ENCODE measurements at regions of chr1 and their contacts with region 1.

Region 1: DNA sequence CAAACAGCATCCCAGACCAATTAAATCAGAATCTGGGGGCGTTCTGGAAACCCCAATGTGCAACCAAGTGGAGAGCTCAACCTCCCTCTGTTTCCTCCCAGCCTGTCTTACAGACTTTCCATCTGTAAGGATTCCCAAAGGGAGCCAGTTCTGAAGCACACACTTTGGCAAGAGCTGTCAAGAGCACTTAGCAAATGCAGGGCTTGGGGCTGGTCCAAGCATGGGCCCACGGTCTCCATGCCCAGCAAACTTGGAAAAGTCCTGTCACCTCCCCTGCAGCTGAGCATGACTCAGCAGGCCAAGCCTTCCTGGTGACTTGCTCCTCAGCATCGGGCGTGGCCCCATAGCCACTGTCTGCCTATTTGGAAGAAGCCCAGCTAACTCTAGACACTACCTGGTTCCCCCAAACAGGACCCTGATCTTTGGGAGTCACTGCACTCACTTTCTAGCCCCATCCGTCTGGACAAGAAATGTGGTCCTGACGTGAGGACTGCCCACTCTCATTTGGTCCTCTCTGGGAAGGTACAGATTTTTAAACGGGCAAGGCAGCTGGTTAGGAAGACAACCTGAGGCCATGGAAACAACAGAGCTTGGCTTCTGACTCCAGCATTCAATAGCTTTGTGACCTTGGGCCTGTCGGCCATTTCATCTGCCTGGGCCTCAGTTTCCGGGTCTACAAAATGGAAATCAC is 16.9 kb downstream of the SLC2A1 start:
- DNase-seq: peak; percentile 13
- ATAC-seq: no peak
- H3K4me3 ChIP-seq: no peak overlapping the region
- H3K4me3 Mint-ChIP-seq: no peak overlapping the region
- H3K27ac ChIP-seq: peak overlapping the region; percentile 66 to 76
- H3K27ac Mint-ChIP-seq: peak overlapping the region; percentile 92
- H3K4me1 ChIP-seq: peaks cover 98 to 100% of the 10 kb centered on the region in 2 donors
- H3K4me1 Mint-ChIP-seq: peaks cover 96% of the 10 kb centered on the region
- H3K27me3 ChIP-seq: no peaks in the 10 kb centered on the region
- H3K27me3 Mint-ChIP-seq: no peaks in the 10 kb centered on the region
- CTCF ChIP-seq: no peak

Region 2: GRCh38 chr1:42873670-42874069 is 68.1 kb before region 1 on chr1:
- CTCF ChIA-PET with region 1: no interaction called
- POLR2A ChIA-PET with region 1: no interaction called
- intact Hi-C with region 1: no loop called
- DNase-seq: no peak
- ATAC-seq: no peak
- H3K4me3 ChIP-seq: no peak overlapping the region
- H3K4me3 Mint-ChIP-seq: no peak overlapping the region
- H3K27ac ChIP-seq: no peak overlapping the region
- H3K27ac Mint-ChIP-seq: no peak overlapping the region
- H3K4me1 ChIP-seq: no peaks in the 10 kb centered on the region
- H3K4me1 Mint-ChIP-seq: no peaks in the 10 kb centered on the region
- H3K27me3 ChIP-seq: no peaks in the 10 kb centered on the region
- H3K27me3 Mint-ChIP-seq: peaks cover 3% of the 10 kb centered on the region
- CTCF ChIP-seq: no peak

Region 3: DNA sequence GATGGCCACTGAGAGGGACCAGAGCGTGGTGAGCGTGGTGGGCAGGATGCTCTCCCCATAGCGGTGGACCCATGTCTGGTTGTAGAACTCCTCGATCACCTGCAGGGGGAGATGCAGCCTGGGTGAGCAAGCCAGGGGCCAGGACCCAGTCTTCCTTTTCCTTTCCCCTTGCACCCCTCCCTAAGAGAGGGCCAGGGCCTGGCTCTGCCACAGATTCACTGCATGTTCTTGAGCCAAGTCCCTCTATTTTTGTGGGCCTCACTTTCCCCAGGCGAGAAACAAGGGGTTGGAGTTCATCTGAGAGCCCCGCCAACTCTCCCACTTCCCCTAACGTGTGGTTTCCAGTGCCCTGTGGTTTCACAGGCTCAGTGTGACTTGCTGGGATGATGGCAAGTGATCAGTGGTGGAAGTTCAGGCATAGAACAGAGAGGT is 10.7 kb before region 1 on chr1:
- CTCF ChIA-PET with region 1: interaction called, 121 read pairs
- POLR2A ChIA-PET with region 1: interaction called, 209 read pairs
- intact Hi-C with region 1: loop called (anchors 1 kb)
- DNase-seq: peak; percentile 80
- ATAC-seq: no peak
- H3K4me3 ChIP-seq: peak overlapping the region; percentile 2 to 42 (median 26)
- H3K4me3 Mint-ChIP-seq: peak overlapping the region; percentile 86
- H3K27ac ChIP-seq: peak overlapping the region; percentile 84 to 97
- H3K27ac Mint-ChIP-seq: peak overlapping the region; percentile 97
- H3K4me1 ChIP-seq: peaks cover 54 to 66% of the 10 kb centered on the region in 2 donors
- H3K4me1 Mint-ChIP-seq: peaks cover 80% of the 10 kb centered on the region
- H3K27me3 ChIP-seq: no peaks in the 10 kb centered on the region
- H3K27me3 Mint-ChIP-seq: no peaks in the 10 kb centered on the region
- CTCF ChIP-seq: peak; percentile 69

Region 4: DNA sequence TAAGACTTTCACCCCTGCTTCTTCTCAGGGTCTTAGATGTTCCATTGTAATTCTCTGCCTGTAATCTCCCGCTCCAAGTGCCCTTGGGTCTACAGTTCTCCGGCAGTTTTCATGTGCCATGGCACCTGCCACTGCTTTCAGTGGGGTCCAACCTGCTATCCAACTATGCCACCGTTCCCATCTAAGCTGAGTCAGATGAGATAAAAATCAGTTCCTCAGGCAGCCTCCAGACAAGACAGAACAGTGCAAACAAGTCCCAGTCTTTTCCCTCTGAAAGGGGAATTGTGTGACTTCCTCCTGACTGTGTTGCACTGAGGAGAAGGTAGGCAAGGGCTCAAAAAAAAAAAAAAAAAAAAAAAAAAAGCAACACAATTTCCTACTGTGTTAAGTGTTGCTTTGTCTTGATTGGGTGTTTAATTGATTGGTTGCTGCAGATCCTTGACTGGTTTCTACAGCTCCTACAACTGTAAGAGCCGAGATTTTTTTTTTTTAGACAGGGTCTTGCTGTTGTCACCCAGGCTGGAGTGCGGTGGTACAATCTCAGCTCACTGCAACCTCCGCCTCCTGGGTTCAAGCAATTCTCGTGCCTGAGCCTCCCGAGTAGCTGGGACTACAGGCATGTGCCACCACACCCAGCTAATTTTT is 179.6 kb after region 1 on chr1:
- CTCF ChIA-PET with region 1: no interaction called
- POLR2A ChIA-PET with region 1: no interaction called
- intact Hi-C with region 1: no loop called
- DNase-seq: no peak
- ATAC-seq: no peak
- H3K4me3 ChIP-seq: no peak overlapping the region
- H3K4me3 Mint-ChIP-seq: no peak overlapping the region
- H3K27ac ChIP-seq: no peak overlapping the region
- H3K27ac Mint-ChIP-seq: no peak overlapping the region
- H3K4me1 ChIP-seq: no peaks in the 10 kb centered on the region
- H3K4me1 Mint-ChIP-seq: no peaks in the 10 kb centered on the region
- H3K27me3 ChIP-seq: peaks cover 0 to 2% (median 0%) of the 10 kb centered on the region in 4 experiments
- H3K27me3 Mint-ChIP-seq: peaks cover 21% of the 10 kb centered on the region
- CTCF ChIP-seq: no peak

Measured in B cell (primary cell).